ENCODE measurements at regions of chr13 and their contacts with region 1.

Region 1: DNA sequence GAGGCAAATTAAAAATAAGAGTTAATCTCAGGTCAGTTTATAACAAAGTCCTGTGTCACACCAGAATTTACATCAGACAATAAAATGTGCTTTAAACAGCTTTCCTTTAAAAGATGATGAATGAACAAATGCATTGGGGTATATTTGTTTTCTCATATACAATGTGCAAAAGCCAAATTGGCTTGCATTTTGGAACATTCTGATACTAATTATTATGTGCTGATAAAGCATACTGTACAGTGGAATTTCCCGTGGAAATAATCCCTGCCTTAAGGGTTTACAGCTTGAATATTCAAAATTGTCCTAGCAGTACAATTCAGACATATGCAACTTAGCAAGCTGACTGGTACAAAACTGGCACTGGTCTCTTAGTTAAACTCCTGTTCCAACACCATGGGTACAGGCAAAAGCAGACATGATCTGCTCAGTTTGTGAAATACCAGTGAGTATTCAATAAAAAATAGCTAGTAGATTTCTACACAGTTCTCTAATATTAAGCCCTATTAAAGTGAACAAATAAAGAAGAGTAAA is 373.4 kb downstream of the SLITRK1 start:
- DNase-seq: no peak
- ATAC-seq: no peak
- H3K4me3 ChIP-seq: no peak overlapping the region
- H3K27ac ChIP-seq: no peak overlapping the region
- H3K4me1 ChIP-seq: no peaks in the 10 kb centered on the region
- H3K27me3 ChIP-seq: no peaks in the 10 kb centered on the region
- CTCF ChIP-seq: no peak

Region 2: GRCh38 chr13:83471011-83471410 is 37.8 kb before region 1 on chr13:
- intact Hi-C with region 1: loop called in 1 of 10 experiments (anchors 1 kb)
- DNase-seq: no peak
- ATAC-seq: no peak
- H3K4me3 ChIP-seq: no peak overlapping the region
- H3K27ac ChIP-seq: no peak overlapping the region
- H3K4me1 ChIP-seq: no peaks in the 10 kb centered on the region
- H3K27me3 ChIP-seq: no peaks in the 10 kb centered on the region
- CTCF ChIP-seq: no peak

Measured in heart right ventricle (tissue), 16 donors.